ENCODE measurements at regions of chrX and their contacts with region 1.

Region 1: GRCh38 chrX:39814391-39814790 is 283.4 kb downstream of the BCOR start:
- DNase-seq: peak; percentile 58
- H3K4me3 Mint-ChIP-seq: no peak overlapping the region
- H3K27ac Mint-ChIP-seq: no peak overlapping the region
- H3K4me1 Mint-ChIP-seq: peaks cover 30% of the 10 kb centered on the region
- H3K27me3 Mint-ChIP-seq: no peaks in the 10 kb centered on the region

Region 2: GRCh38 chrX:39418731-39419638 is 395.4 kb before region 1 on chrX:
- CTCF ChIA-PET with region 1: no interaction called
- intact Hi-C with region 1: no loop called
- DNase-seq: no peak
- H3K4me3 Mint-ChIP-seq: no peak overlapping the region
- H3K27ac Mint-ChIP-seq: peak overlapping the region; percentile 74
- H3K4me1 Mint-ChIP-seq: peaks cover 36% of the 10 kb centered on the region
- H3K27me3 Mint-ChIP-seq: no peaks in the 10 kb centered on the region

Region 3: DNA sequence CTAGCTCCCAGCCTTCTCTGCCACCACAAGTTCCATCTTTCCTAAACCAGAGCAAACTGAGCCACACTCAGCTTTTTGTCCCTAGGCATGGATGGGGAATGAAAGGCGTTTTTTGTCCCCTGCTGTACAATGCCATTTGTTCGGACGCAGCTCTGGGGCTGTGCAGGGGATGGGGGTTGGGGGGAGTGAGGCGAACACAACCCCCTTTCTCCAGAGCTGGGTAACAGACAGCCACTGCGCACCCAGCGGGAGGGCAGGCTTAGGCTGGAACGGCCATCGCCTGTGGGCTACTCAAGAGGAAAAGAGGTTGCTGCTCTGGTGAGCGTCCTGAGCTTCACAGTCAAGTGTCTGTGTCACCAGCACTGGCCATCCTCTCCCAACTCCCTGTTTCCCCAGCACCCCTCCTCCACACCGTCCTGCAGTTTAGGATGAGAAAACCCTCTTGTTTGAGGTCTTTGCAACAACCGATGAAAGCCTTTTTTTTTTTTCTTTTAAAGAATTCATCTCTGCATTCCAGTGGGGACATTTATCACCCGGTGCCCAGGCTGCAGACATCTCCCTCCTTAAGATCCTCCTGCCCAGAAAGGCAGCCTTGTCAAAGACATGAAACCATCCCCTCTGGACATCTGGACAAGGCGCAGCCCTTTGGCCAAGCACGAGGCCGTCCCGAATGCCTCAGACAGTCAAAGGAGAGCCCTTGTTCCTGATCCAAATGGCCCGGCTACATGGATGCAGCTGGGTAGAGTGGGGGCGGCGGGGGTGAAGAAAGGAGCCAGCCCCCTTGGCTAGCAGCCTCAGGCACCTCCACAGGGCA is 136.2 kb before region 1 on chrX:
- CTCF ChIA-PET with region 1: no interaction called
- intact Hi-C with region 1: no loop called
- DNase-seq: no peak
- H3K4me3 Mint-ChIP-seq: no peak overlapping the region
- H3K27ac Mint-ChIP-seq: no peak overlapping the region
- H3K4me1 Mint-ChIP-seq: no peaks in the 10 kb centered on the region
- H3K27me3 Mint-ChIP-seq: no peaks in the 10 kb centered on the region

Region 4: GRCh38 chrX:39730662-39731397 is 83.6 kb before region 1 on chrX:
- CTCF ChIA-PET with region 1: no interaction called
- intact Hi-C with region 1: loop called (anchors 5 kb)
- DNase-seq: peak; percentile 75
- H3K4me3 Mint-ChIP-seq: peak overlapping the region; percentile 45
- H3K27ac Mint-ChIP-seq: no peak overlapping the region
- H3K4me1 Mint-ChIP-seq: peaks cover 17% of the 10 kb centered on the region
- H3K27me3 Mint-ChIP-seq: no peaks in the 10 kb centered on the region

Region 5: DNA sequence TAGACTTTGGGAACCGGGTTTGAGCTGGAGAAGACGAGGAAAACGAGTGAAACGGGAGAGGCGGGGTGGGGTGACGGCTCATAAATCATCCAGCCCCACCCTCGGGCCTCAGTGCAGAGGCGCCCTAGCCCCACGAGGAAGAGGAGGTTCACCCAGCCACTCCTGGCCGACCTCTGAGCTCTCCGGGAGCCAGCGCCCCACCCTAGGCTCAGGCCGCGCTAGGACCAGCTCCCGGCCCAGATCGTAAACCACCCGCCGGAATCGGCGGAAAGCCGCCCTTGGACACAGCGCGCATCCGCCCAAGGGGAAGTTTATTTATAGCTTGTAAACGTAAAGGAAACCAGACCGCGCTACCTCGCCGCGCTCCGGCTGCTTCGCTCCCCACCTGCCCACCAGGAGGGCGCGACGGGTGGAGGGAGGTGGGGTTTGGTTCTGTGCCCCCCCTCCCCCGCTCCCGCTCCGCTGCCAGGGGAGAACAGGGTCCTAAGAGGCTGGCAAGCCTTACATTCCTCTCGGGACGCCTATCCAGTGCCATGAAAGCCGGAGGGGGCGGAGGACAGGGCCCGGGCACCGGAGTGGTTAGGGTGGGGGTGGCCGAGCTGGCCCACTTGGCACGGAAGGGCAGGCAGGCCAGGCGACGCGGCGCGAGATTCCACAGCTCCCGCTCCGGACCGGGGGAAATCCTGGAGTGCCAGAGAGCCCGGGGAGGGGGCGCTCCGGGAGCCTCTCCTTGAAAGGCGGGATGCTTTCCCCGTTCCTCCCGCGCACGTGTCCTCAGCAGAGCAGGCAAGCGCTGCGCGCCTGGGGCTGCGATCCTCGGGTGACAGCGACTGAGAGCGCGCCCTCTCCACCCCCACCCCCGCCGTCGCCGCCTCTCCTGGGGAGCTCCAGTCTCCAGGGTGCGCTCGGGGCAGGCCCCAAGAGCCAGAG is 199.1 kb after region 1 on chrX:
- CTCF ChIA-PET with region 1: no interaction called
- intact Hi-C with region 1: loop called (anchors 2 kb)
- DNase-seq: peak; percentile 55
- H3K4me3 Mint-ChIP-seq: peak overlapping the region; percentile 69
- H3K27ac Mint-ChIP-seq: peak overlapping the region; percentile 63
- H3K4me1 Mint-ChIP-seq: peaks cover 26% of the 10 kb centered on the region
- H3K27me3 Mint-ChIP-seq: peaks cover 24% of the 10 kb centered on the region

Region 6: DNA sequence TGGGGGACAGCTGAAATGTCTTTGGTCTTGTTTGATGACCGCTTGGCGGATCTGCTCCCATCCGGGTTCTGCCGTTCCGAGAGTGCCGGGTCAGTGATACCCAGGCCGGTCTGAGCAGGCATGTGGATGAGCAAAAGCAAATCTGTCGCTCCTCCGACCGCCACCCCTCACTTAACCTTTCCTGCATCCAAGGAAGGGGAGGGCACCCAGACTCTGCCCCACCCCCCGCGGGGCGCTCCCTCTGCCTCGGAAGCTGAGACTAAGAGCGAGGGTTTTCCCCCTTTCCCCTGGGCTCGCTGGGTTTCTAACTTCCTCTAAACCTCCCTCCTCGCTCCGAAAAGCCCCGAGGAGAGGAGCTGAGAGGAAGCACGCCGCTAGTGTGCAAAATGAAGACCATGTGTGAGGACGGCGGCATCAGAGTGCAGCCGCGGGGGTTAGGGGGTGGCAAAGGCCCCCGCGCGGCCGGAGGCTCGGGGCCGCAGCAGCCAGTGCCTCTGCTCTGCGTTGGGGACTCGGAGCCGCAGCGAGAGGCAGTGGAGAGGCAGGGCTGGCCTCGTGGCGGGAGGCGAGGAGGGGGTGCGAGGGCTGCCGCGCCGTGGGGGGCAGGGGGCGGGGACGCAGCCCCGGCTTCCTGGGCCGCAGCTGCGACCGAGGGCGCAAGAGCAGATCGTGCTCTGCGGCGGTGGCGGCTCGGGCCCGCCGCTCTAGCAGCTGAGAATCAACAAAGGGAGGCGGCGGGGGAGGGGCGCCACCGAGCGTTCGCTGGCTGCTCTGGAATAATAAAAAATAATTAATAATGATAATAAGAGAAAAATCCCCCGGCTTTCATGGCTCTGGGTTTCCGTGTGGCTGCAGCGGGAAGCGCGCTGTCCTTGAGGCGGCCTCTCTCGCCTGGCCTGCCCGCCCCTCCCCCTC is 339.2 kb after region 1 on chrX:
- CTCF ChIA-PET with region 1: interaction called, 3 read pairs
- intact Hi-C with region 1: loop called (anchors 5 kb)
- DNase-seq: peak; percentile 91
- H3K4me3 Mint-ChIP-seq: peak overlapping the region; percentile 72
- H3K27ac Mint-ChIP-seq: peak overlapping the region; percentile 53
- H3K4me1 Mint-ChIP-seq: peaks cover 10% of the 10 kb centered on the region
- H3K27me3 Mint-ChIP-seq: no peaks in the 10 kb centered on the region

Region 7: DNA sequence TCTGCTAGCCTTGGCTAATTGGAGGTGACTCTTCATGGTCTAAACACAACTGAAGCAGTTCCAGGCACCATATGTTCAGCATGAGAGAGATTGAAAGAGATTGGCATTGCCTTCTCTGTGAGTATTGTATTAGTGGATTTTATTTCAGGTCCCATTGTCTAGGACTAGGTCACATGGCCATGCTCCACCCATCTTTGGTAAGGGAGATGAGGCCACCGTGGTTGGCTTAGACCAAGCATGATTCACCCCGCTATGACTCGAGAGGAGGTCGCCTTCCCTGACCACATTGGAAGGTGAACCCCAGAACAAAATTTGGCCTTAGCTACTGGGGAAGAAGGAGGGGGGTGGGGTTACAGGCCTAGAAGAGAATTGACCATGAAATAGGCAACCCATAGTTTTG is 393.2 kb after region 1 on chrX:
- CTCF ChIA-PET with region 1: no interaction called
- intact Hi-C with region 1: loop called (anchors 1 kb)
- DNase-seq: peak; percentile 58
- H3K4me3 Mint-ChIP-seq: no peak overlapping the region
- H3K27ac Mint-ChIP-seq: no peak overlapping the region
- H3K4me1 Mint-ChIP-seq: peaks cover 8% of the 10 kb centered on the region
- H3K27me3 Mint-ChIP-seq: no peaks in the 10 kb centered on the region

Region 8: DNA sequence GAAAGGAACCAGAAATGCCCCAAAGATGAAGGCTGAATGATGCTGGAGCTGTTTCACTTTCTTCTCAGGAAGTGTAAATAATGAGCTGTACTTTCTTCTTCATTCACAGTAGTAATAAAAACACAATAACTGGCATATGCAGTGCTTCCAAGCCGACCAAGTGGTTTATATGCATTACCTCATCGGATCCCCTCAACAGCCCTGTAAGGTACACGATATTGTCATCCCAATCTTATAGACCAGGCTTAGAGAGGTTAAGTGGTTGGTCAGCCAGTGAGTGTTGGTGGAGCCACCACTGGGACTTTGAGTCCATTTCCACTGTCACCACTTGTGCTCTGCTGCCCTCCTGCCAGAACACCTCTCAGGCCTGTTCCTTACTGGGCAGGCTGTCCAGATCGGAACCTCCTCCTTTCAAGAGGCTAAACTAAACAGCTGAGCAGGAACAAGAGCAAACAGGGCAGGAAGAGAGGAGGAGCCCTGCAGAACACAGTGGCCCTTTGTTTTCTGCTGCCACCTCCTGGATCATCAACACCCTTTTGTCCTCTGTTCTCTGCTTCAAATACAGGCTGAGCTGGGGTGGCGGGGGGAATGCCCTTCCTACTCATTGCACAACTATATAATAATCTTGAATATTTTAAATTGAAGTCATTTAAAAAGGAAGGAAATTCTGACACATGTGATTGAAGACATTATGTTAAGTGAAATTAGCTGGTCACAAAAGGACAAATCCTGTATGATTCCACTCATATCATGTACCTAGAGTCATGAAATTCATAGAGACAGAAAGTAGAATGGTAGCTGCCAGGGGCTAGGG is 653.8 kb after region 1 on chrX:
- CTCF ChIA-PET with region 1: no interaction called
- intact Hi-C with region 1: loop called (anchors 1 kb)
- DNase-seq: peak; percentile 79
- H3K4me3 Mint-ChIP-seq: no peak overlapping the region
- H3K27ac Mint-ChIP-seq: peak overlapping the region; percentile 61
- H3K4me1 Mint-ChIP-seq: peaks cover 36% of the 10 kb centered on the region
- H3K27me3 Mint-ChIP-seq: no peaks in the 10 kb centered on the region